PC-9 (cell line): ENCODE measurements at regions of chr5 and their contacts with region 1.

Region 1: DNA sequence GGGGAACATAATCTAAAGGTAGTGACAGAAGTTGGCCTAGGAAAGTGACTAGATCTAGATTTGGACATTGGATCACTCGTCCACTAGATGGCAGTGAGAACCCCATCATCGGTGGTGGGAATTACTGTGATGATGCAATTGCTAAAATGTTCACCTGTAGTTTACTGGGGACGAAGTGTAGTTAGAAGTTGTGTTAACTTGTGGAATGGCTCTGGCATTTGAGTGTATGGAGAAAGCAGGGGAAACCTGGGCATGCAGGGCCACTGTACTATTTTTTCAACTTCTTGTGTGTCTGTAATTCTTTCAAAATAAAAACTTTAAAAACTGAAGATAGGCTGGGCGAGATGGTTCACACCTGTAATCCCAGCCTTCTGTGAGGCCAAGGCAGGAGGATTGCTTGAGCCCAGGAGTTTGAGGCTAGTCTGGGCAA is 75.5 kb downstream of the PHAX start:
- DNase-seq: peak; percentile 45 to 46
- H3K4me3 ChIP-seq: no peak overlapping the region
- H3K27ac ChIP-seq: no peak overlapping the region
- H3K4me1 ChIP-seq: no peaks in the 10 kb centered on the region
- H3K27me3 ChIP-seq: no peaks in the 10 kb centered on the region
- CTCF ChIP-seq: peak; percentile 87

Region 2: GRCh38 chr5:126723643-126724042 is 47.4 kb after region 1 on chr5:
- CTCF ChIA-PET with region 1: interaction called, 10 read pairs
- POLR2A ChIA-PET with region 1: no interaction called
- intact Hi-C with region 1: no loop called
- DNase-seq: no peak
- H3K4me3 ChIP-seq: no peak overlapping the region
- H3K27ac ChIP-seq: no peak overlapping the region
- H3K4me1 ChIP-seq: no peaks in the 10 kb centered on the region
- H3K27me3 ChIP-seq: no peaks in the 10 kb centered on the region
- CTCF ChIP-seq: no peak

Region 3: DNA sequence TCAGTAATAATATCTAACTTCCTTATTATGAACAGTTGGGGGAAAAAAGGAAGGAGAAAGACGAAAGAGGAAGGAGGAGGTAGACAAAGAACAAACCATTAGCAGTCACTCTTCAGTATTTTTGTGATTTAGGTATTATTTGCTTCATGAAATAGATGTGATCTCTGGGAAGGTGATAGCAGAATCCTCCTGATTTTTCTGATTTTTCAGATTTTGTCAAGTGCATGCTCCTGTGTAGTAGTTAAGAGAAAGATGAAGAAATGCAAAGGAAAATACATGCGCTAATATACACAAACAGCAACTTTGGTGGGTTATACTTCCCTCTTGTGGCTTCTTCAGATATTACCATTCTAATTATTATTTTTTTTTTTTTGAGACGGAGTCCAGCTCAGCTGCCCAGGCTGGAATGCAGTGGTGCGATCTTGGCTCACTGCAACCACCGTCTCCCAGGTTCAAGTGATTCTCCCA is 132.3 kb after region 1 on chr5:
- CTCF ChIA-PET with region 1: no interaction called
- POLR2A ChIA-PET with region 1: no interaction called
- intact Hi-C with region 1: loop called (anchors 2 kb)
- DNase-seq: no peak
- H3K4me3 ChIP-seq: no peak overlapping the region
- H3K27ac ChIP-seq: no peak overlapping the region
- H3K4me1 ChIP-seq: no peaks in the 10 kb centered on the region
- H3K27me3 ChIP-seq: no peaks in the 10 kb centered on the region
- CTCF ChIP-seq: peak; percentile 71

Region 4: DNA sequence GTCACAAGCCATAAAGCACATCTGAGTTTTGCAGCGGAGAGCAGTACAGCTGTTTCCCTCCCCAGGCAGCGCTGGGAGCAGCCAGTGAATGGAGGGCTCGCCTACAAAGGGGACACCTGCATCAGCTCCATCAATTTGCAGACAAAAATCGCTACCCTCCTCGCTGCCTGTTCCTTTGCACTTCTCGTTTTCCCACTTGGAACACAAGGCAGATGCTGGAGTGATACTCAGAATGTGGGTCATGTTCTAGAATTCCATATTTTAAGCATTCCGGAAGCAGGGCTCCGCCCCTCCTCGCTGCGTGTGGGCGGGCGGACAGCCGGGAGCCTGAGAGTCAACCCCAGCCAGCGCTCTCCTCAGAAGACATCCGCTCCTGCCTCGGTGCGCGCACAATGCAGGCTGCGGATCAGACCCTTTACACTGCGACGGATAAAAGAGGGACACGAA is 192.8 kb after region 1 on chr5:
- CTCF ChIA-PET with region 1: no interaction called
- POLR2A ChIA-PET with region 1: no interaction called
- intact Hi-C with region 1: no loop called
- DNase-seq: no peak
- H3K4me3 ChIP-seq: no peak overlapping the region
- H3K27ac ChIP-seq: no peak overlapping the region
- H3K4me1 ChIP-seq: no peaks in the 10 kb centered on the region
- H3K27me3 ChIP-seq: no peaks in the 10 kb centered on the region
- CTCF ChIP-seq: no peak

Region 5: GRCh38 chr5:127254729-127255284 is 578.6 kb after region 1 on chr5:
- CTCF ChIA-PET with region 1: no interaction called
- POLR2A ChIA-PET with region 1: no interaction called
- intact Hi-C with region 1: no loop called
- DNase-seq: no peak
- H3K4me3 ChIP-seq: no peak overlapping the region
- H3K27ac ChIP-seq: no peak overlapping the region
- H3K4me1 ChIP-seq: no peaks in the 10 kb centered on the region
- H3K27me3 ChIP-seq: no peaks in the 10 kb centered on the region
- CTCF ChIP-seq: no peak

Region 6: GRCh38 chr5:127492854-127493738 is 816.9 kb after region 1 on chr5:
- CTCF ChIA-PET with region 1: no interaction called
- POLR2A ChIA-PET with region 1: no interaction called
- intact Hi-C with region 1: loop called (anchors 5 kb)
- DNase-seq: peak in 1 of 2 experiments; percentile 37
- H3K4me3 ChIP-seq: no peak overlapping the region
- H3K27ac ChIP-seq: no peak overlapping the region
- H3K4me1 ChIP-seq: no peaks in the 10 kb centered on the region
- H3K27me3 ChIP-seq: no peaks in the 10 kb centered on the region
- CTCF ChIP-seq: peak; percentile 98

Region 7: DNA sequence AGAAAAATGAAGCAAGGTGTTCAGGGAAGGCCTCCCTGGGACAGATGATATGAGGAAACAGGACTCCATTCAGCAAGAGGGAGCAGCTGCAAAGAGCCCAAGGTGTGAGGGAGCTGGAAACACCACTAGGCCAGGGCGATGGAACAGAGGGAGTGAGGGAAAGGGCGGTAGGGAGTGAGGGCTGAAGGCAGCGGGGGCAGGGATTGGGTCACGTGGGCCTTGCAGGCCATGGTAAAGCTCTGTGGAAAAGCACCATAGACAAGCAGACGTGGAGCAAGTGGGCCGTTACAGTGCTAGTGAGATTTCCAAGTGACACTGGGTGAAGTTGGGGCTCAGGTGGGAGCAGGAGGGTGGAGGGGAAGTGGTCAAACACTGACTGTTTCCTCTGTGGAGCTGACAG is 830.4 kb after region 1 on chr5:
- CTCF ChIA-PET with region 1: interaction called, 16 read pairs
- POLR2A ChIA-PET with region 1: no interaction called
- intact Hi-C with region 1: no loop called
- DNase-seq: no peak
- H3K4me3 ChIP-seq: no peak overlapping the region
- H3K27ac ChIP-seq: no peak overlapping the region
- H3K4me1 ChIP-seq: no peaks in the 10 kb centered on the region
- H3K27me3 ChIP-seq: 0 out of 2 replicates have a peak, but pooled peaks cover 3% of the 10 kb centered on the region
- CTCF ChIP-seq: no peak